Right ventricle myocardium superior (tissue), 1 donor: ENCODE measurements at regions of chr10 and their contacts with region 1.

Region 1: GRCh38 chr10:106679314-106679713 is 485.2 kb downstream of the SORCS1 start:
- DNase-seq: no peak
- ATAC-seq: peak; percentile 45

Region 2: GRCh38 chr10:106175760-106176377 is 503.4 kb before region 1 on chr10:
- intact Hi-C with region 1: no loop called
- DNase-seq: no peak
- ATAC-seq: no peak

Region 3: GRCh38 chr10:106474891-106475290 is 204.4 kb before region 1 on chr10:
- intact Hi-C with region 1: no loop called
- DNase-seq: no peak
- ATAC-seq: no peak

Region 4: DNA sequence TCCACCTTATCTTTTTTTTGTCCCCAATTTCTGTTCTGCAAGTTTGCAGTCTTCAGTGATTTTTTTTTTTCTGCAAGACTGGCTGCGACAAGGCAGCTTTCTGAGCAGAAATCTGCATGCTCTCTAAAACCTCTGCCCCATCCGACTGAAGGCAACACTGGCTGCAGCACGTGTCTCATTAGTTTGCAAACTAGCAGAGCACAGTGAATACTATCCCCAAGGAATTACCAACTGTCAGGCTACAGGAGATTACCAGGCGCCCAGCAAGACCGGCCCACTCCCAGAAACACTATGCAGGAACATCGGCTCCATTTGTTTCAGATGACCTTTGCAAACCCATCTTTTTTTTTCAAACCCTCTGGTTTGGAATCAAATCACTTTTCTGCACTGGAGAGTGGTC is 53.6 kb before region 1 on chr10:
- intact Hi-C with region 1: loop called (anchors 5 kb)
- DNase-seq: no peak
- ATAC-seq: no peak